Endothelial cell of umbilical vein (primary cell): ENCODE measurements at regions of chr4 and their contacts with region 1.

Region 1: GRCh38 chr4:77862478-77863216 is at the start of gene MRPL1:
- DNase-seq: peak; percentile 97
- H3K4me3 ChIP-seq: peak within 1 kb of the TSS; percentile 86 to 98 (median 88)
- H3K27ac ChIP-seq: peak within 1 kb of the TSS; percentile 100
- H3K4me1 ChIP-seq: peaks cover 14% of the 10 kb centered on the region
- H3K27me3 ChIP-seq: no peaks in the 10 kb centered on the region
- CTCF ChIP-seq: no peak
- POLR2A ChIP-seq: peak; percentile 91
- total RNA-seq, gene MRPL1: 38.6 and 42.9 TPM in 2 replicates

Region 2: DNA sequence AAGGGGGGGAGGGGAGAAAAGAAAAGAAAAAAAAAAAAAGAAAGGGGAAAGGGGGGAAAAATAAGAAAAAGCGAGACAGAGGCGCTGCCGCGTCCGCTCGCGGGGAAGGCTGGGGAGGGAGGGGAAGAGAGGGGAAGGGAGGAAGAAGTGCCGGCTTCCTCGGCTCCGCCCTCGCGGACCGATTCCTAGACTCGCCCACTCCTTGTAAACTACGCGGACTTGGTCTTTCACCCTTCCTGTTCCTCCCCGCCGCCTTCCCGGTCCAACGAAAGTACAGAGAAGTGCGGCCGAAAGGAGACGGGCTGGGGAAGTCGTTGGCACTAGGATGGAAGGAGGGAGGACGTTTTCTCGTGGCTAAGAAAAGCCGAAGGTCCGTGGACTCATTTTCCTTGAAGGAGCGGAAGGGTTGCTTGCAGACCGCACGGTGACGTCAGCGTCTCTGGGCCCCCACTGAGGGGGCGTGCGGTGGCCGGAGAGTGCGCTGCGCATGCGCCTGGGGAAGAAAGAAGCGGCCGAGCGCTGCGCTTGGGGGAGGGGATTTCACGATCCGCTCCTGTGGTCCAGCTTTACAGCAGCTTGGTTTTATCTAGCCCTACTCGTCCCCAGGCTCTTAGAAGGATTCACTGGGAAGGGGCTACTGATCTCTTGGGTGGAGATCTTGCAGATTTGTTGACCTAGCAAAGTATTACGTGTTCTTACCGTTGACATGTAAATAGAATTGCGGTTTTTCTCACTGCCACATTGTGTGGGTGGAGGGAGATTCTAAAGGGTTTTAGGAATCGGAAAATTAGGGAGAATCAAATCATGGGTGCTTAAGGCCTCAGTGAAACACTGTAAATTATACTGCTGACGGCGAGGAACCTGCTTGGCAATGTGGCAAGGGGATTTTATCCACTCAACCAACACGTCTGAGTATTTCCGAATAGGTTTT is 786.5 kb before region 1 on chr4 and contains the start of gene CCNI:
- CTCF ChIA-PET with region 1: no interaction called
- POLR2A ChIA-PET with region 1: no interaction called
- dilution Hi-C with region 1: no loop called
- intact Hi-C with region 1: loop called (anchors 5 kb)
- DNase-seq: peak; percentile 99
- H3K4me3 ChIP-seq: peak within 1 kb of the TSS; percentile 83 to 98 (median 90)
- H3K27ac ChIP-seq: peak within 1 kb of the TSS; percentile 98
- H3K4me1 ChIP-seq: peaks cover 22% of the 10 kb centered on the region
- H3K27me3 ChIP-seq: no peaks in the 10 kb centered on the region
- CTCF ChIP-seq: no peak
- POLR2A ChIP-seq: peak; percentile 94
- total RNA-seq, gene CCNI: 212 and 227 TPM in 2 replicates

Region 3: DNA sequence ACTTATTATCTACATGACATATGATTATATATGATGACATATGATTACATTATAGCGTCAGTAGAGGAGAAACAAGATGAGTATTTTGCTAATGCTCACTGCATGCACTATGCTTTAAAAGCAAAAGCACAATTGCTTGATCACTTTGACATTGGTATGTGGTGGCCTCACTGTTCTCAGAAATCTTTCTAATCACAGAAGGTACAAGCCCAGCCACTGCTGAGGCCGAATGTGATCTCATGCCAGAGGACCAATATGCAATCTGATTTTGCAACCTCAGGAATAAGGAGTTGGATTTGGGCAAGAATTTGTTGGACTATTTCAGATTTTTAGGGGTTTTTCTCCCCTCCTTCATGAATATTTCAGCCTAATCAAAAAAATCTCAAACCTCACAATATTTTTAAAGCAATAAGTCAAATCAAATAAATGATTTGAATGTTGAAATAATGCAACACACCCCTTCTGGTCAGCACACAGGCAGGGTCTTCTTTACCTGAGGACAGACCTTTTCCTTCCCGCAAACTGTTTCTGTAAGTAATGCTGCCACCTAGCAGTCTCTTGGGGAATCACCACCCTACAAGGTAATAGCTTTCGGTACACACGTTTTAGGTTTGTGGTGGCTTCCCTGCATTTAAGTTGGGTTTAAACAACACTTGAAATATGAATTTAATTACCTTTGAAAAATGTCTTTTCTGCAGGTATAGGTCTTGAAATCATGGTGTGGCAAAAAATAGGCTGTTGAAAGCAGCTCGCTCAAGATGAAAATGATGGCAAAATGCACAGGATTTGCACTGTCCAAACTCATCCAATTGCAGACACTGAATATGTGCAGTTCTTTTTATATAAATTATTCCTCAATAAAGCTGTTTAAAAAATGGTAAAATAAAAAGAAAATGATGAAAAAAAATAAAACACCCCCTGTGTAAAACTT is 261.9 kb before region 1 on chr4:
- CTCF ChIA-PET with region 1: no interaction called
- POLR2A ChIA-PET with region 1: no interaction called
- dilution Hi-C with region 1: no loop called
- intact Hi-C with region 1: no loop called
- DNase-seq: peak; percentile 29
- H3K4me3 ChIP-seq: no peak overlapping the region
- H3K27ac ChIP-seq: no peak overlapping the region
- H3K4me1 ChIP-seq: no peaks in the 10 kb centered on the region
- H3K27me3 ChIP-seq: peaks cover 5 to 19% of the 10 kb centered on the region in 2 experiments
- CTCF ChIP-seq: peak; percentile 63 to 76
- POLR2A ChIP-seq: no peak

Region 4: DNA sequence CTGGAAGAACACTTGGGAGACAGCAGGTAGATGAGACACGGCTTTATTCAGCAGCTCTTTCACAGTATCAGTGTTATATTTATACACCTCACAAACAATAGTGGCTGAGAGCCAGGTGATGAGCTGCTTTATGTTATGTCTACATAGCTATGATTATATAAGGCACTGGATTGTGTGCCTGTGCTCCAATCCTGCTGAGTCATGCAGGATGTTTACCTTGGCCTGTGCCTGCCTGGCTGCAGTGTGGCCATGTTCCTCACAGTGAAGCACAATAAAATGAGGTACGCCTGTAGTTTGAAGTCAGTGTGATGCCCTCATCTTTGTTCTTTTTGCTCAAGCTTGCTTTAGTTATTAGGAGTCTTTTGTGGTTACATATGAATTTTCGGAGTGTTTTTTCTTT is 225.7 kb before region 1 on chr4:
- CTCF ChIA-PET with region 1: no interaction called
- POLR2A ChIA-PET with region 1: no interaction called
- dilution Hi-C with region 1: no loop called
- intact Hi-C with region 1: loop called (anchors 5 kb)
- DNase-seq: peak; percentile 97
- H3K4me3 ChIP-seq: no peak overlapping the region
- H3K27ac ChIP-seq: peak overlapping the region; percentile 51
- H3K4me1 ChIP-seq: peaks cover 10% of the 10 kb centered on the region
- H3K27me3 ChIP-seq: peaks cover 0 to 1% of the 10 kb centered on the region in 2 experiments
- CTCF ChIP-seq: no peak
- POLR2A ChIP-seq: no peak

Region 5: DNA sequence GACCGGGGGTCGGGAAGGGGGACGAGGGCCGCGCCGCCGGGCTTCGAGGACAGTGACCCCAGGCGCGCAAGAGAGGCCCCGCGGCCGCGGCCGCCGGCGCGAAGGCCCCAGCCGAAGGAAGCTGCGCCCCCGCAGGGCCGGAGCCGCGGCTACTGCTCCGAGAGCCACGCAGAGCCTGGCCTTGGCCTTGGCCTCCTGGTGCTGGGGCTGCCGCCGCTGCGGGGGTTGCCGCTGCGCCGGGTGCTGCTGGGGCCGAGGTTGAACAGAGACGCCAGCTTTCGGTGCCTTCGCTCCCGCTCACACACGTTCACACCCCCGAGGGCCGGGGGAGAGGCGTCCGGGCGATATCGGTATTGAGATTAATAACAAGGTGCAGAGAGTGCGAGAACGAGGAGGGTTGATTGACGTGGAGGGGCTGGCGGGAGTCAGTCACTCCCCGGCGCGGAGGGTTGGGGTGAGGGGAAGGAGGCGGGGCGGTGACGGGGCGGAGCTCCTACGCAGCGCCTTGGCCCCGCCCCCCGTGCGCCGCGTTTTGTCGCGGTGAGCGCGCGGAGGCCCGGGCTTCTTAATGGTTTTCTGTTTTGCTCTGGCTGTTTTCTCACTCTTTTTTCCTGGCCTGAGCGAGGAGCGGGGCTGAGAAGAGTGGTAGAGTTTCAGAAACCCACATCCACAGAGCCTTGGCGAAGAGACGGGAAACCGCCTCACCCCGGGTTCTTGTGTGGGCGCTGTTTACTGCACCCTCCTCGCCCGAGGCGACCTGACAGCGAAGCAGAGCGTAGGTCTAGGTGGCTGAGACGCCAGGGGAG is 42.6 kb before region 1 on chr4:
- CTCF ChIA-PET with region 1: interaction called, 20 read pairs
- POLR2A ChIA-PET with region 1: interaction called, 25 read pairs
- dilution Hi-C with region 1: no loop called
- intact Hi-C with region 1: loop called (anchors 1 kb)
- DNase-seq: peak; percentile 89
- H3K4me3 ChIP-seq: peak overlapping the region; percentile 85 to 99 (median 94)
- H3K27ac ChIP-seq: peak overlapping the region; percentile 96
- H3K4me1 ChIP-seq: peaks cover 28% of the 10 kb centered on the region
- H3K27me3 ChIP-seq: no peaks in the 10 kb centered on the region
- CTCF ChIP-seq: no peak
- POLR2A ChIP-seq: peak; percentile 90

Region 6: DNA sequence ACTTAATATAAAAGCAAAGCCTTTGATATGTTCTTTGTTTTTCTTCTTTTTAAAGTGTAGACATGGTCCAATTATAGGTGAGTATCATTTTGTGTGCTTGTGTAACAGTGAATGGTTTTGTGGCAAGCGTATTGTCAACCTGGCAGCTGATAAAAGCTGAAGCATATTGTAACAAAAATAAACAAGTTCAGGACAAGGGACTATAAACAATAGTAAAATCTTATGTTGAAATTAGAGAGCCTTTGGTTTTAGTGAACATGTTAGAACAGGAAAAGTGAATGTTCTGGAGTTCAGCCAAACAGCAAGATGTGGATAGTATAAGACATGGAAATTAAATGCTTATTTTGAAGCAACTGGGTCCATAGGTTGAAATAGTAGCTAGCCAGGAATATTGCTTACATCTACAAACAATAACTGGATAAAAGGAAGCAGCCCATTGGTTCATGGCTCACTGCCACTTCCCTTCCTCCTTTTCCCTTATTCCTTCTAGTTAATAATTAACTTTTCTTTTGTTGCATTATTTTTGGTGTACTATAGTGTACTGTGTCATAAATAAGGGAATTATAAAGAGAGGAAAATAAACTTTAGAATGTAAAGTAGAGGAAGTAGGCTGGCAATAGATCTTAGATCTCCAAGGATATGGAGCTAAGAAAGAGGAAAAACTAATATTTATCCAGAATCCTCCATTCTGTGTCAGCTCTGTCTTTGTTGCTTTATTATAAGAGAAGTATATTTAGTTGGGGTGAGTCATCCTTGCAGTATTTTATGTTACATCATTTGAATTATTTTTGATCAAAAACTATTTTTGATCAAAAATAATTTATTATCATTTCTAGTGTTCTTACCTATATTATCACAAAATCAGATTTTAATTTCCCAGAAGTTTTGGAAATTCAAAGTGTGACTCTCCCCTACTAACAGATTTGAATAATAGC is 65.6 kb after region 1 on chr4:
- CTCF ChIA-PET with region 1: interaction called, 12 read pairs
- POLR2A ChIA-PET with region 1: interaction called, 16 read pairs
- dilution Hi-C with region 1: no loop called
- intact Hi-C with region 1: loop called (anchors 2 kb)
- DNase-seq: peak; percentile 92
- H3K4me3 ChIP-seq: no peak overlapping the region
- H3K27ac ChIP-seq: peak overlapping the region; percentile 96
- H3K4me1 ChIP-seq: peaks cover 59% of the 10 kb centered on the region
- H3K27me3 ChIP-seq: no peaks in the 10 kb centered on the region
- CTCF ChIP-seq: no peak
- POLR2A ChIP-seq: no peak

Region 7: GRCh38 chr4:78551479-78552351 is 689.1 kb after region 1 on chr4 and contains the start of gene ANXA3:
- CTCF ChIA-PET with region 1: no interaction called
- POLR2A ChIA-PET with region 1: no interaction called
- dilution Hi-C with region 1: no loop called
- intact Hi-C with region 1: loop called (anchors 1 kb)
- DNase-seq: peak; percentile 39
- H3K4me3 ChIP-seq: peak within 1 kb of the TSS; percentile 38 to 89 (median 63)
- H3K27ac ChIP-seq: peak within 1 kb of the TSS; percentile 98
- H3K4me1 ChIP-seq: peaks cover 26% of the 10 kb centered on the region
- H3K27me3 ChIP-seq: no peaks in the 10 kb centered on the region
- CTCF ChIP-seq: peak in 1 of 2 donors; percentile 4
- POLR2A ChIP-seq: peak; percentile 63
- total RNA-seq, gene ANXA3: 73.8 and 78.4 TPM in 2 replicates

Region 8: DNA sequence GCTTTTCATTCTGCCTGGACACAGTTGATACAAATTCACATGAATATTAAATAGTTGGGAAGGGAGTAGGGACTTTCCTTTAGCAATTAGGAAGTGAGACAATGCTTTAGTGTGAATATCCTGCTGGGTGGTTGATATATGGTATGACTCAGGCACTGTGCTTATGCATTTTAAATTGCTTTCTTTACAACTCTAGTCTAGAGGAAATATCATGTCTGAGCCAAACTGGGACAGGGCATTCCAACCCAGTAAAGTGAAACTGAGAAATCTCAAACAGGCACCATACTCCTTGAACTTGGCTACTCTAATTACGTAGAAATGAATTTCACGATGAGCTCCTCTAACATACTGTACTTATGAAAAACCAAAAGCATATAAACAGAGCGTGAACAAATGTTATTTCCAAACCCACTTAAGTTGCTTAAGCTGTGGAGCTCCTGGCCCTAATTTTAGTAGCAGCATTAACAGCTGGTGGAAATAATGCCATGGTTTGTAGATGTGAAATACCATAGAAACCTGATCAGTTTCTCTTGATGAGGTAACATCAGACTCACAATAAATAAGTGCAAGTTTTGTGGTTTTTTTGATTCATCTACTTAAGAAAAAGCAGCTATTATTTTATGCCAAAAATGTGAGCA is 1788.3 kb after region 1 on chr4:
- CTCF ChIA-PET with region 1: no interaction called
- POLR2A ChIA-PET with region 1: no interaction called
- dilution Hi-C with region 1: no loop called
- intact Hi-C with region 1: loop called (anchors 5 kb)
- DNase-seq: peak; percentile 96
- H3K4me3 ChIP-seq: peak overlapping the region in 1 of 3 experiments; percentile 3
- H3K27ac ChIP-seq: peak overlapping the region; percentile 87
- H3K4me1 ChIP-seq: peaks cover 29% of the 10 kb centered on the region
- H3K27me3 ChIP-seq: no peaks in the 10 kb centered on the region
- CTCF ChIP-seq: no peak
- POLR2A ChIP-seq: no peak